ENCODE measurements at regions of chr1 and their contacts with region 1.

Region 1: DNA sequence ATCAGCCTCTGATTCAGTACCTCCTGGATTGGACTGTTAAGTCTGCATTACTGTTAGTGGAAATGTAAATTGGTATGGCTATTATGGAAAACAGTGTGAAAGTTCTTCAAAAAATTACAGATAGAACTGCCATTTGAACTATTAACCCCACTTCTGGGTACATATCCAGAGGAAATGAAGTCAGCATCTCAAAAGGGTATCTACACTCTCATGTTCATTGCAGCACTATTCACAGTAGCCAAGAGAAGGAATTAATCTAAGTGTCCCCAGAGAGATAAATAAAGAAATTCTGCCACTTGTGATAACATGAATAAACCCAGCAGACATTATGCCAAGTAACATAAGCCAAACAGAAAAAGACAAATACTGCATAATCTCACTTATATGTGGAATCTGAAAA is 676.0 kb downstream of the PLA2G4A start:
- DNase-seq: no peak

Region 2: DNA sequence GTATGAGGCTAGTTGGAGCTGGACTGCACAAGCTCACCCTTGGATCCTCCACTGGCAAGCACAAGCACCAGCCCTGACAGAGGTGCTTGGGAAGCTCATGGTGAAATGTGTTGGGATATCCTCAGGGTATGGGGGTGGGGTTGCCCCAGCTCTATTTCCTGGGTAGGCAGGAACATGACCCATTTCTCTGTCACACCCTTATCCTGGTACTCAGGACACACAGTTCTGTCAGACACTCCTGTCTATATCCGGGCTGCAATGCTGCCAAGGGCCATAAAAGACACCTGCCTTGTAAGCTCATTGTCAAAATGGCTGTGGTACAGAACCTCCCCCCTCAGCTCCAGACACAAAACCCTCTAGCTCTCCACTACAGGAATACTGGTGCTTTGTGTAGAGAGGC is 39.4 kb before region 1 on chr1:
- intact Hi-C with region 1: no loop called
- DNase-seq: no peak

Region 3: DNA sequence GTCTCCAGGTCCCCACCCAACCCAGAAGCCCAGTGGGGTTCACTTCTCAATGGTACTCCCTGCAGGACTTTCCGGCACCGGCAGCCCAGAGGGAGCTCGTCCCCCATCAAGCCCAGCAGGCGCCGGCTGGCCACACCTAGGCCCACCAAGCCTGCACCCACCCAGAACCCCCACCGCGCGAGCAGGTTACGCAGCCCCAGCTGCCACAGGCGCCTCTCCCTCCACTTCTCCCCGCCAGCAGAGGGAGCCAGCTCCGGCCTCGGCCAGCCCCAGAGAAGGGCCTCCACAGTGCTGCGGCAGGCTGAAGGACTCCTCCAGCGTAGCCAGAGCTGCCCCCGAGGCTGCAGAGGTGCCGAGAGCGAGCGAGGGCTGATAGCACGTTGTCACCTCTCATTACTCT is 46.3 kb after region 1 on chr1:
- intact Hi-C with region 1: no loop called
- DNase-seq: no peak

Region 4: DNA sequence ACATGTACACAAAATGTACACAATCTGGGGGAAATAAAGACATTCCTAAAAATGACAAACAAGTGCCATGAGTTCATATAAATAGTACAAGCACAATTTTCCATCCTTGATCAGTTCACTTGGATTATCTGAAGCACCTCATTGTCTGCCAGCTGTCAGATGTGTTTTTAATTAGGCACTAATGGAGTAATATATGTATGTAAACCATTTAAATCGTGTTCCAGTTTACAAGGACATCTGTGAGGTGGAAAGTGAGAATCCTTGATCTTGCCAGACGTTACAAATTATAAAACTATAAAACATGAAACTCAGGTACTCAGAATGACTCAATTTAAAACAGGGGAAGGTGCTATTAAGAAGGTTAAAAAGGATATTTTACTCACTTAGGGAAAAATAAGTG is 636.2 kb after region 1 on chr1:
- intact Hi-C with region 1: loop called in 1 of 2 experiments (anchors 5 kb)
- DNase-seq: no peak